HCT116 (cell line): ENCODE measurements at regions of chr16 and their contacts with region 1.

Region 1: DNA sequence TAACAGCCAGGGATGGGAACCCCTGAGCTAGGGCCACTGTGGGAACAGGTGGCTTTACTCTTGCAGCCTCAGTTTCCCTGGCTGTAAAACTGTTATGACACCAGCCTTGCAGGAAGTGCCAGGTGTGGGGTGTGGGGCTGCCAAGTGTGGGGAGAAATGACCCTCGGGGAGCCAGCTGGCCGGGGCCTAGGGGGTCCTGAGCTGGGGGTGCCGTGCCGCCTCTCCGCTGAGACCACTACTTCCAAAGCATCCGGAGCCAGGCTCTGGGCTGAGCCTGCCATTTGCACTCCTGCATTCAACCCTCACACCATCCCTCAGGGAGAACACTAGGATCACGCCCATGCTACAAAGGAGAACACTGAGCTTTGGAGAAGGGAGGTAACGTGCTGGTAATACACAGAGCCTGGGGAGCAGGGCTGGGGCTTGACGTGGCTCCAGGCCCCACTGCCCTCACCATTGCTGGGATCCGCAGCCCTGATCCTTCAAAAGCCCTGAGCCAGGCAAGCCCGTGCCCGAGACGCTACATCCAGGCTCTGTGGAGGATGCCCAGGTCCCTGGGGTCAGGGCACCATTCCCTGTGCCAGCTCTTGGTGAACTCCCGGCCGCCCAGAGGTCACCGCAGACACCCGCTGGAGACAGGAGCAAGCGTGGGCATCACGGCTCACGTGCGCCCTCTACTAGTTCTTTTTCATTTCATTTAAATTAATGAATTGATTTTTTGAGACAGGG is 28.8 kb upstream of the GINS2 start:
- DNase-seq: peak; percentile 49
- ATAC-seq: peak; percentile 69
- H3K4me3 ChIP-seq: no peak overlapping the region
- H3K27ac ChIP-seq: no peak overlapping the region
- H3K4me1 ChIP-seq: peaks cover 22 to 37% of the 10 kb centered on the region in 2 experiments
- H3K27me3 ChIP-seq: no peaks in the 10 kb centered on the region
- CTCF ChIP-seq: peak; percentile 54 to 91 (median 86); a peak in 5 of 6 replicates
- POLR2A ChIP-seq: no peak
- RAD21 ChIP-seq: peak; percentile 91

Region 2: DNA sequence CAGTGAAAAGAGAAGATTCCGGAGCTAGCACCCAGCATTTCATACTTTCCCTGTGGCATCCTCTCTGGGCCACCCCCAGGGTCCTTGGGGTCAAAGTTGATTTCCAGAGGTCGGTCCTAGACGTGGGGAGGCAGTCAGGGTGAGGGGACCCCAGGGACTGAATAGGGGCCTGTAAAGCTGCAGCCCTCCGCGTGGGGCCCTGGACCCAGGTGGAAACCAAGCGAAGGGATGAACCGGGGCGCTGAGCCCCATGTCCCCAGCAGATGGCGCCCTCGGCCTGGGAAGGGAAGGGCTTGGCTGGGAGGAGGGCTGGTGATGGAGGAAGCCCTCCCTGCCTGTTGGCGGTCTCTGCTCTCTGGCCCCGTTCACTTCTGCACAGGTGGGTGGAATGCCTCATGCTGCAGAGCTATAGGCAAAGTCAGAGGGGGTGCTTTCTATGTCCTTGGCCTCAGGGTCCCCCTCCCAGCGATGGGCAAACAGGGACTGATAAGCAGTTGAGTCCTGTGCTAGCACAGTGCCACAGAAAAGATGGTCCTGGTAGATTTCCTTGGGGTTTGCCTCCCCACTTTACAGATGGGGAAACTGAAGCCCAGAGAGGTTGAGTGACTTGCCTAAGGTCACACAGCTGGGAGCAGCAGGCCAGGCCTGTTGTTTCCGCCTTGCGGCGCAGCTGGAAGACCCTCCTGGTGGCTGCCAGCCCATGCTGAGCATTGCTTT is 441.9 kb before region 1 on chr16:
- CTCF ChIA-PET with region 1: no interaction called
- POLR2A ChIA-PET with region 1: no interaction called
- RAD21 ChIA-PET with region 1: no interaction called
- intact Hi-C with region 1: loop called (anchors 1 kb)
- DNase-seq: peak; percentile 19
- ATAC-seq: peak; percentile 96
- H3K4me3 ChIP-seq: no peak overlapping the region
- H3K27ac ChIP-seq: no peak overlapping the region
- H3K4me1 ChIP-seq: no peaks in the 10 kb centered on the region
- H3K27me3 ChIP-seq: no peaks in the 10 kb centered on the region
- CTCF ChIP-seq: peak; percentile 91 to 100 (median 99)
- POLR2A ChIP-seq: no peak
- RAD21 ChIP-seq: peak; percentile 96

Region 3: GRCh38 chr16:85659805-85660495 is 57.6 kb before region 1 on chr16:
- CTCF ChIA-PET with region 1: interaction called, 5 read pairs
- POLR2A ChIA-PET with region 1: no interaction called
- RAD21 ChIA-PET with region 1: no interaction called
- intact Hi-C with region 1: loop called (anchors 5 kb)
- DNase-seq: peak; percentile 34
- ATAC-seq: peak; percentile 93
- H3K4me3 ChIP-seq: no peak overlapping the region
- H3K27ac ChIP-seq: no peak overlapping the region
- H3K4me1 ChIP-seq: 0 out of 4 replicates have a peak, but pooled peaks cover 0 to 3% of the 10 kb centered on the region in 2 experiments
- H3K27me3 ChIP-seq: no peaks in the 10 kb centered on the region
- CTCF ChIP-seq: peak; percentile 91 to 100 (median 100)
- POLR2A ChIP-seq: no peak
- RAD21 ChIP-seq: peak; percentile 87

Region 4: GRCh38 chr16:85675251-85675927 is 42.2 kb before region 1 on chr16:
- CTCF ChIA-PET with region 1: interaction called, 12 read pairs
- POLR2A ChIA-PET with region 1: no interaction called
- RAD21 ChIA-PET with region 1: no interaction called
- intact Hi-C with region 1: loop called (anchors 2 kb)
- DNase-seq: no peak
- ATAC-seq: peak; percentile 78
- H3K4me3 ChIP-seq: no peak overlapping the region
- H3K27ac ChIP-seq: no peak overlapping the region
- H3K4me1 ChIP-seq: no peaks in the 10 kb centered on the region
- H3K27me3 ChIP-seq: no peaks in the 10 kb centered on the region
- CTCF ChIP-seq: peak; percentile 64 to 65 (median 65); a peak in 5 of 6 replicates
- POLR2A ChIP-seq: no peak
- RAD21 ChIP-seq: peak; percentile 59